Motor neuron (in vitro differentiated cells): ENCODE measurements at regions of chr1 and their contacts with region 1.

Region 1: GRCh38 chr1:65687428-65688214 is 105.1 kb upstream of the PDE4B start:
- ATAC-seq: peak; percentile 78 to 96 (median 89)
- H3K4me3 ChIP-seq: no peak overlapping the region
- H3K27ac ChIP-seq: no peak overlapping the region
- H3K4me1 ChIP-seq: peaks cover 0 to 3% of the 10 kb centered on the region in 2 donors

Region 2: GRCh38 chr1:65067491-65068201 is 620.0 kb before region 1 on chr1:
- in situ Hi-C with region 1: loop called in 1 of 9 experiments (anchors 25 kb)
- ATAC-seq: peak; percentile 24 to 73 (median 64)
- H3K4me3 ChIP-seq: peak overlapping the region; percentile 76 to 100 (median 93)
- H3K27ac ChIP-seq: peak overlapping the region; percentile 95 to 96
- H3K4me1 ChIP-seq: peaks cover 17 to 19% of the 10 kb centered on the region in 2 donors

Region 3: GRCh38 chr1:65235867-65236805 is 451.5 kb before region 1 on chr1:
- in situ Hi-C with region 1: loop called in 2 of 9 experiments (anchors 10 to 25 kb)
- ATAC-seq: peak in 2 of 8 experiments; percentile 29 to 38
- H3K4me3 ChIP-seq: no peak overlapping the region
- H3K27ac ChIP-seq: no peak overlapping the region
- H3K4me1 ChIP-seq: peaks cover 0 to 4% of the 10 kb centered on the region in 2 donors

Region 4: DNA sequence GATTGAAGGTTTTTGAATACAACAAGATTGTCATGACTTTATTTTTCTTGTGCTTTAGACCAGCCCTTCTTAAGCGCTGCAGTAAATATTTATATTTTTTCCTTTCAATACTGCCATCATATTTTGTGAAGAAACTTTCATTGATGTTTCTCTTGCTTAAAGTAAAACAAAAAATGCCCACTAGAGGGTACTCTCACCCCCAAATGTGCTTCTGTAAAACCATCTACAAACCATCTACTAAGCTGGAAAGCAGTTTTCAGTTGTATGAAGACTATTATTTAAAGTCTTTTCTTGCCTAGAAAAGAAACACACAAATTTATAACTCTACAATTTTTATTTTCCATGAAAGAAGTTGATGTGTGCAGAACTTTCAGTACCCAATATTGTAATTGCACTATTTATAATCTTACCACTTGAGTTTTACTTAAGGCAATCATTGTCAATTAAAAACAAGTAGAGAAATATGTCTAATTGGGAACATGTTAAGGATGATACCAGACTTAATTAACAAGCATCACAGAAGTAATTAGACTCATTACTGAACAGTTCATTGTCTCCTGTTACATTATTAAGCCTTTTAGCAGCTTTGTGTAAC is 256.4 kb before region 1 on chr1:
- in situ Hi-C with region 1: loop called in 4 of 9 experiments (anchors 10 to 25 kb)
- ATAC-seq: peak in 2 of 8 experiments; percentile 28 to 45
- H3K4me3 ChIP-seq: no peak overlapping the region
- H3K27ac ChIP-seq: no peak overlapping the region
- H3K4me1 ChIP-seq: no peaks in the 10 kb centered on the region

Region 5: DNA sequence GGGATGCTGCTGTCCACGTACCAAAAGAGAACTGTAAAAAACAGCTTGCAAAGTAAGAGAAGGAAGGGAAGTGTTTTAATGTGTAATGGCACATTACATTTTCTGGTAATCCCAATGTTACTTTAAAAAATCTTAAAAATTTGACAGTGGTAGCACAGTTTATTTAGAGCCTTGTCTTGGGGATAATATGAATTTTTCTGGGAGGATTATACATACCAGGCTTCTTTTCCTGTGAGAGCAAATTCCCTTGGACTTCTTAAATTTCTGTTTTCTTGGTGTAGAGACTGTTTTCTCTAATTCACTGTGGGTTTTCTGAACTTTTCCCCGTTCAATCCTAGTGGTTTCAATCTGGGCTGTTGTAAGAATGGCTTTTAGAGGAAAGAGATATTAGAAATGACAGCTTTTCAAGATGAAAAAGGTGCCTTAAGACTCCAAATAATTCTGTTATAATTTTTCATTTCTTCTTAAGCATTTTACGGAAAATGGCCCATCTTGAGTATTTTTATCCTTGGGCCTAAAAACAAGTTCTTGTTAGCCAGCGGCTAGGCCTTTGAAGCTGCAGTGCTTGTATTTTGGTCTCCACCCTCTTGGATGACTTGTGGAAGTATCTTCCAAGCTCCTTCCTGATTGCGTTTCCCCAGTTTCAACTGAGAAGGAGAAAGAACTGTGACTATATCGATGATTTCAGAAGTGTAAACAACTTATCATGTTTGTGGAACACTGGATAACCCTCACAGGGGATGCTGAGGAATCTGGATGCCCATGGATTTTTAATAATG is 197.2 kb before region 1 on chr1:
- in situ Hi-C with region 1: no loop called
- ATAC-seq: no peak
- H3K4me3 ChIP-seq: no peak overlapping the region
- H3K27ac ChIP-seq: no peak overlapping the region
- H3K4me1 ChIP-seq: no peaks in the 10 kb centered on the region

Region 6: DNA sequence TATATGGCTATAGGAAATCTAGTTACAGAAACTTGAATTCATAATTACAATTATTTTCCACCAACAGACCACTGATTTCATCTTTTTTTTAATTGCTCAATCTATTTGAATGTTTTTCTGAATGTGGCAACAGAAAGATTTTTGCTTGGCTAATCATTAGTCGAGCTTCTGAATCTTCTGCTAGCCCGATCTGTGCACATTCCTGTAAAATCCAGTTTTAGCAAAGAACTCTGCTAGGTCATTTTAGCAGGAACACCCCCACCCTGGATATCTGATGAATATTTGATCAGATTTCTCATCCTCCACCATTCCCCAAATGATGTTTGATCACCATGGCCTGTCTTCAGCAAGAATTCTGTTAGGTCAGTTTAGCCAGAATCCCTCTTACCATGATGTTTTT is 90.9 kb before region 1 on chr1:
- in situ Hi-C with region 1: no loop called
- ATAC-seq: no peak
- H3K4me3 ChIP-seq: no peak overlapping the region
- H3K27ac ChIP-seq: no peak overlapping the region
- H3K4me1 ChIP-seq: peaks cover 0 to 6% of the 10 kb centered on the region in 2 donors